ENCODE measurements at regions of chr1 and their contacts with region 1.

Region 1: GRCh38 chr1:17527036-17527914 is 12.2 kb upstream of the ARHGEF10L start:
- DNase-seq: no peak
- H3K4me3 ChIP-seq: no peak overlapping the region
- H3K27ac ChIP-seq: peak overlapping the region; percentile 73 to 89
- H3K4me1 ChIP-seq: peaks cover 0 to 33% of the 10 kb centered on the region in 2 donors
- H3K27me3 ChIP-seq: no peaks in the 10 kb centered on the region
- CTCF ChIP-seq: no peak
- POLR2A ChIP-seq: no peak

Region 2: DNA sequence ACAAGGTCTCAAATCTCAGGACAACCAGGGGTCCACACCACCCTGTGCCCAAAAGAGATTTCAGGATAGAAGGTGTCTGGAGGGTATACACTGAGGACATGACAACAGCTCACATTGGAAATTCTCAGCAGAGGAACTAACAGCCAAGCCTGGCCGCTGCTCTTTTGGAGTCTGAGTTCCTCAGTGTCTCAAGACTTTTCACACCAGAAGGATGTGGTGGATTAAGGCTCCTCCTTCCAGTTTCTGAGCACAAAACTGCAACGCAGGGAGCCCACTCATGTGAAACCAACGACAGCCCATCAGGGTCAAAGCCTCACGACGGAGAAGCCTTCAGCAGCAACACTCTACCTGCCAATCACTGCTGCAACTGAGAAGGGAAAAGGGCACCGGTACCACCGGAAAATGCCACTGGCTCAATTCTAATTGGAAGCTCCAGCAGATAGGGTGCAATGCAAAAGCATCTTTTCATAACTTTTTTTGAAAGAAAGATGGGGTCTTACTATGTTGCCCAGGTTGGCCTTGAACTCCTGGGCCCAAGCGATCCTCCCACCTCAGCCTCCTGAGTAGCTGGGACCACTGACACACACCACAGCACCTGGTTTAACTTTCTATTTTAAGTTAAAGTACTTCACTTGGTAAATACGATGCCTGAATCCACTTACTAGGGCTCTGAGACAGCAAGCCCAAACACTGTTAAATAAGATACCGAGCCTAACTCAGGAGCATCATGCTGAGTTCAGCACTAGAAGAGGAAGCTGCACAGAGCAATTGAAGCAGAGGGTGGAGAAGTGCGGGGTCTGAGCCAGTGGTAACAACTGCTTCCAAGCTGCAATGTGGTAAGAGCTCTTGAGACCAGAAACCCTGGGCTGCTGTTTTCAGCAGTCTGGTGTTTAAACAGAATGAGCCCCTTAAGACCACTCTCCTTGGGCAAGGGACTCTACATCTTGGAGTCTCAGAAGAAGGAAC is 1950.3 kb after region 1 on chr1:
- intact Hi-C with region 1: loop called (anchors 5 kb)
- DNase-seq: no peak
- H3K4me3 ChIP-seq: peak overlapping the region in 1 of 3 donors; percentile 28
- H3K27ac ChIP-seq: peak overlapping the region; percentile 42 to 74
- H3K4me1 ChIP-seq: peaks cover 7 to 41% of the 10 kb centered on the region in 2 donors
- H3K27me3 ChIP-seq: no peaks in the 10 kb centered on the region
- CTCF ChIP-seq: no peak
- POLR2A ChIP-seq: no peak